HCT116 (cell line): ENCODE measurements at regions of chr15 and their contacts with region 1.

Region 1: GRCh38 chr15:60520825-60521368 is 42.0 kb upstream of the ICE2 start:
- DNase-seq: peak; percentile 57
- ATAC-seq: peak; percentile 87
- H3K4me3 ChIP-seq: no peak overlapping the region
- H3K27ac ChIP-seq: no peak overlapping the region
- H3K4me1 ChIP-seq: peaks cover 3 to 15% of the 10 kb centered on the region in 2 experiments; a peak in 2 of 4 replicates
- H3K27me3 ChIP-seq: no peaks in the 10 kb centered on the region
- CTCF ChIP-seq: peak; percentile 76 to 97 (median 88); a peak in 5 of 6 replicates
- POLR2A ChIP-seq: no peak
- RAD21 ChIP-seq: peak; percentile 88

Region 2: DNA sequence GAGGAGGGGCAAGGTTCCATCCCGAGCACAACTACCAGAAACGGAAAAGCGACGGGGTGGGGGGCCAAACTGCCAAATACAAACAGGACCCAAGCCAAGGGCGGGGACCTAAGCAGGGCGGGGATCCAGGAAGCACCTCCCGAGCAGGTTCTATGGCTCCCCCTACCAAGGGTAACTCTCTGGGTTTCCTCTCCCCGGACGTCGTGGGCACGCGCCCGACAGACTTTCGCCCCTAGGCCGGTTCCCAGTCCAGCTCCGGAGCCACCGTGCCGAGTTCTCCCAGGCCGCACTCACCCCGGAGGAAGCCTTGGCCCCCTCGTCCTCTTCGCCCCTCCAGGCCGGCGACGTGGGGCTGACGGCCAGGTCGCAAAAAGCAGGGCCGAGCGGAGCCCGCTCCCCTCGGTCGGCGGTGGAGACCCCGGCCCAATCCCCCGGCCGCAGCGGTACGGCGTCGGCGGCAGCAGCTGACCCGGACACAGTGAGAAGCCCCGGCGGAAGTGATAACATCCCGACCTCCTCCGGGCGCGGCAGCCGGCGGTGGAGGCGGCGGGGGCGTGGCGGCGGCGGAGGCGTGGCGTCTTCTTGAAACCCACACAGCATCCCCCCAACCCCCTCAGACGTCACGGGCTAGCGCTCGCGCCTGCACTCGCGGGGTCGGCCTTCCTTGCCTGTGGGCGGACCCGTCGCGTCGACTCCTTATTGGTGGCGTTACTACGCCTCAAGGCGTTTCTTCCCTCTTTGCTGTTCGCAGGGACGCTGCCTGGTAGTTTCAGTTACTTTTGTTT is 831.9 kb before region 1 on chr15 and contains the start of gene BNIP2:
- CTCF ChIA-PET with region 1: interaction called, 12 read pairs
- POLR2A ChIA-PET with region 1: no interaction called
- RAD21 ChIA-PET with region 1: interaction called in 1 of 2 experiments, 3 read pairs
- intact Hi-C with region 1: loop called (anchors 10 kb)
- DNase-seq: peak; percentile 94
- ATAC-seq: peak; percentile 96
- H3K4me3 ChIP-seq: peak within 1 kb of the TSS; percentile 85 to 92
- H3K27ac ChIP-seq: peak within 1 kb of the TSS; percentile 95
- H3K4me1 ChIP-seq: peaks cover 15% of the 10 kb centered on the region in 2 experiments
- H3K27me3 ChIP-seq: no peaks in the 10 kb centered on the region
- CTCF ChIP-seq: no peak
- POLR2A ChIP-seq: no peak
- RAD21 ChIP-seq: no peak
- total RNA-seq, gene BNIP2: 53.1 TPM

Region 3: GRCh38 chr15:59725172-59725486 is 795.8 kb before region 1 on chr15:
- CTCF ChIA-PET with region 1: interaction called, 12 read pairs
- POLR2A ChIA-PET with region 1: no interaction called
- RAD21 ChIA-PET with region 1: no interaction called
- intact Hi-C with region 1: loop called (anchors 10 kb)
- DNase-seq: no peak
- ATAC-seq: no peak
- H3K4me3 ChIP-seq: no peak overlapping the region
- H3K27ac ChIP-seq: no peak overlapping the region
- H3K4me1 ChIP-seq: peaks cover 6 to 7% of the 10 kb centered on the region in 2 experiments; a peak in 3 of 4 replicates
- H3K27me3 ChIP-seq: peaks cover 25% of the 10 kb centered on the region
- CTCF ChIP-seq: no peak
- POLR2A ChIP-seq: no peak
- RAD21 ChIP-seq: no peak

Region 4: GRCh38 chr15:59751552-59752413 is 769.1 kb before region 1 on chr15:
- CTCF ChIA-PET with region 1: no interaction called
- POLR2A ChIA-PET with region 1: no interaction called
- RAD21 ChIA-PET with region 1: no interaction called
- intact Hi-C with region 1: loop called (anchors 10 kb)
- DNase-seq: peak; percentile 10
- ATAC-seq: peak; percentile 73
- H3K4me3 ChIP-seq: no peak overlapping the region
- H3K27ac ChIP-seq: no peak overlapping the region
- H3K4me1 ChIP-seq: no peaks in the 10 kb centered on the region
- H3K27me3 ChIP-seq: peaks cover 59% of the 10 kb centered on the region
- CTCF ChIP-seq: peak; percentile 14 to 39 (median 32); a peak in 3 of 6 replicates
- POLR2A ChIP-seq: no peak
- RAD21 ChIP-seq: peak; percentile 35; the same call in 1 of the 2 replicates

Region 5: GRCh38 chr15:60358935-60359682 is 161.8 kb before region 1 on chr15:
- CTCF ChIA-PET with region 1: interaction called, 18 read pairs
- POLR2A ChIA-PET with region 1: no interaction called
- RAD21 ChIA-PET with region 1: interaction called in 1 of 2 experiments, 4 read pairs
- intact Hi-C with region 1: loop called (anchors 2 kb)
- DNase-seq: no peak
- ATAC-seq: no peak
- H3K4me3 ChIP-seq: no peak overlapping the region
- H3K27ac ChIP-seq: no peak overlapping the region
- H3K4me1 ChIP-seq: peaks cover 19 to 29% of the 10 kb centered on the region in 2 experiments
- H3K27me3 ChIP-seq: no peaks in the 10 kb centered on the region
- CTCF ChIP-seq: no peak
- POLR2A ChIP-seq: no peak
- RAD21 ChIP-seq: no peak

Region 6: GRCh38 chr15:60408438-60409105 is 112.3 kb before region 1 on chr15:
- CTCF ChIA-PET with region 1: no interaction called
- POLR2A ChIA-PET with region 1: no interaction called
- RAD21 ChIA-PET with region 1: no interaction called
- intact Hi-C with region 1: no loop called
- DNase-seq: no peak
- ATAC-seq: peak; percentile 18; the same call in 1 of the 2 replicates
- H3K4me3 ChIP-seq: no peak overlapping the region
- H3K27ac ChIP-seq: peak overlapping the region; percentile 28; the same call in 1 of the 2 replicates
- H3K4me1 ChIP-seq: peaks cover 29 to 37% of the 10 kb centered on the region in 2 experiments
- H3K27me3 ChIP-seq: no peaks in the 10 kb centered on the region
- CTCF ChIP-seq: no peak
- POLR2A ChIP-seq: no peak
- RAD21 ChIP-seq: no peak

Region 7: GRCh38 chr15:60507596-60508424 is 13.1 kb before region 1 on chr15:
- CTCF ChIA-PET with region 1: interaction called, 28 read pairs
- POLR2A ChIA-PET with region 1: no interaction called
- RAD21 ChIA-PET with region 1: no interaction called
- intact Hi-C with region 1: no loop called
- DNase-seq: peak; percentile 54
- ATAC-seq: peak; percentile 87
- H3K4me3 ChIP-seq: no peak overlapping the region
- H3K27ac ChIP-seq: no peak overlapping the region
- H3K4me1 ChIP-seq: peaks cover 0 to 7% of the 10 kb centered on the region in 2 experiments; a peak in 2 of 4 replicates
- H3K27me3 ChIP-seq: no peaks in the 10 kb centered on the region
- CTCF ChIP-seq: peak; percentile 34 to 96 (median 89); a peak in 5 of 6 replicates
- POLR2A ChIP-seq: no peak
- RAD21 ChIP-seq: peak; percentile 60